HCT116 (cell line): ENCODE measurements at regions of chr4 and their contacts with region 1.

Region 1: DNA sequence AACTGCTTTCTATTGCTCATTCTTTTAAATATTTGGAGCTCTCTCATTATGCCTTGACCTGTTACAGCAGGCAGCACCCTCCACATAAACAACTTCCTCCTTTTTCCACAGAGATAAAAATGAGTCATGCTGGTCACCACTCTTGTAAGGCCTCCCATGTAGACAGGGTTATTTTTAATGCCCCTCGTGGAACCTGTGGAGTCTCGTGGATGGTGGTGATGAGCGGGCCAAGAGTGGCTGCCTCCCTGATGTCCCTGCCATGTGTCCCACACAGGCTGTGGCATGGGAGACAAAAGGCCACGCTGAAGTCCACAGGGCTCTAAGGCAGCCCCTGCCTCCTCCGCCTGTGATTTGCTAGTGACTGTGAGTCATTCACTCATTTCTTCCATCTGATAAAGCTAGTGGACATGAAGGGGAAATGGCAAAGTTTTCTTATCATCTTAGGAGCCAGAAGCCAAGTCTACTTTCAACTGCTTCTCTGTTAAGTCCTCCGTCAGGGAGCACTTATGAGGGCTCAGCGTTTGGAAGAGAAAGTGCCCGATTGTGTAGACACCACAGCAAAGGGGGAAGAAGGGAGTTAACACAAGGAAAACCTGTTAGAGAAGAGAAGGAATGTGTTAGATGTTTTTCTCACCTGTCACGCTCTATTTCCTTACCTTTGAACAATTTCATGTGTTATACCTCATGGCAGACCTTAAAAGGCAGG is 121.6 kb upstream of the FAT1 start:
- DNase-seq: peak; percentile 92
- ATAC-seq: peak; percentile 77
- H3K4me3 ChIP-seq: peak overlapping the region; percentile 4 to 44; a peak in 3 of 4 replicates
- H3K27ac ChIP-seq: peak overlapping the region; percentile 98
- H3K4me1 ChIP-seq: peaks cover 41 to 58% of the 10 kb centered on the region in 2 experiments
- H3K27me3 ChIP-seq: no peaks in the 10 kb centered on the region
- CTCF ChIP-seq: no peak
- POLR2A ChIP-seq: peak; percentile 20
- RAD21 ChIP-seq: no peak

Region 2: GRCh38 chr4:185263419-185263818 is 1581.9 kb before region 1 on chr4:
- CTCF ChIA-PET with region 1: no interaction called
- POLR2A ChIA-PET with region 1: no interaction called
- RAD21 ChIA-PET with region 1: no interaction called
- intact Hi-C with region 1: no loop called
- DNase-seq: no peak
- ATAC-seq: no peak
- H3K4me3 ChIP-seq: no peak overlapping the region
- H3K27ac ChIP-seq: no peak overlapping the region
- H3K4me1 ChIP-seq: peaks cover 5 to 7% of the 10 kb centered on the region in 2 experiments; a peak in 3 of 4 replicates
- H3K27me3 ChIP-seq: no peaks in the 10 kb centered on the region
- CTCF ChIP-seq: no peak
- POLR2A ChIP-seq: no peak
- RAD21 ChIP-seq: no peak

Region 3: GRCh38 chr4:186201535-186202230 is 643.6 kb before region 1 on chr4:
- CTCF ChIA-PET with region 1: no interaction called
- POLR2A ChIA-PET with region 1: no interaction called
- RAD21 ChIA-PET with region 1: no interaction called
- intact Hi-C with region 1: no loop called
- DNase-seq: peak; percentile 66
- ATAC-seq: peak; percentile 90
- H3K4me3 ChIP-seq: no peak overlapping the region
- H3K27ac ChIP-seq: no peak overlapping the region
- H3K4me1 ChIP-seq: peaks cover 0 to 17% of the 10 kb centered on the region in 2 experiments; a peak in 2 of 4 replicates
- H3K27me3 ChIP-seq: no peaks in the 10 kb centered on the region
- CTCF ChIP-seq: peak; percentile 90 to 98 (median 95)
- POLR2A ChIP-seq: no peak
- RAD21 ChIP-seq: peak; percentile 67

Region 4: DNA sequence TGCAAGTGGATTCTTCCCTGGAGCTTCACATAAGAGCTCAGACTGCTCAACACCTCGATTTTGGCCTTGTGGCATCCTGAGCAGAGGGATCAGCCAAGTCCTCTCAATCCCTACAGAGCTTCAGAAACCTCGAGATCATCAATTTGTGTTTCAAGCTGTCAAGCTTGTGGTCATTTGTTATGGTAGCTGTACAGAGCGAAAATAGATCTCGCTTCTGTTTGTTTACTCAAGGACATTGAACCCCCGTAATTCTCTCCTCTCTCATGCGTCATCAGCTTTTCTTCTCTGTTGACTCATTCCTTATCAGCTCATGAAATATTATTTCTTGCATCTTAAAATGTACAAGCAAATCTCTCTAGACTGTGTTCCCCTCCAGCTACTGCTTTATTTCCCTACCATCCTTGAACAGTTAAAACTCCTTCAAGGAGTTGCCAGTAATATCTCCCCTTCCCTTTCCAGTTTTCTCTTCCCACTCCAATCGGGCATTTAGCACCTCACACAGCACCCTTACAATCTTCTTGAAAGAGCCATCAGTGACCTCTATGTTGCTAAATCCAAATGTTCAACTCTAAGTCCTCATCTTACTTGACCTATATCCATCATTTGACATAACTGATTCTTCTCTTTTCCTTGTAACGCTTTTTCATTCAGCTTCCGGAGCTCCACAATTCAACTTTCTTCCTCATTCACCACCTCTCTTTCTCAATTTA is 15.4 kb before region 1 on chr4:
- CTCF ChIA-PET with region 1: no interaction called
- POLR2A ChIA-PET with region 1: interaction called, 21 read pairs
- RAD21 ChIA-PET with region 1: no interaction called
- intact Hi-C with region 1: no loop called
- DNase-seq: peak; percentile 82
- ATAC-seq: peak; percentile 43
- H3K4me3 ChIP-seq: peak overlapping the region in 1 of 2 experiments; percentile 40; a peak in 2 of 4 replicates
- H3K27ac ChIP-seq: peak overlapping the region; percentile 88
- H3K4me1 ChIP-seq: peaks cover 80 to 98% of the 10 kb centered on the region in 2 experiments
- H3K27me3 ChIP-seq: no peaks in the 10 kb centered on the region
- CTCF ChIP-seq: no peak
- POLR2A ChIP-seq: no peak
- RAD21 ChIP-seq: no peak

Region 5: DNA sequence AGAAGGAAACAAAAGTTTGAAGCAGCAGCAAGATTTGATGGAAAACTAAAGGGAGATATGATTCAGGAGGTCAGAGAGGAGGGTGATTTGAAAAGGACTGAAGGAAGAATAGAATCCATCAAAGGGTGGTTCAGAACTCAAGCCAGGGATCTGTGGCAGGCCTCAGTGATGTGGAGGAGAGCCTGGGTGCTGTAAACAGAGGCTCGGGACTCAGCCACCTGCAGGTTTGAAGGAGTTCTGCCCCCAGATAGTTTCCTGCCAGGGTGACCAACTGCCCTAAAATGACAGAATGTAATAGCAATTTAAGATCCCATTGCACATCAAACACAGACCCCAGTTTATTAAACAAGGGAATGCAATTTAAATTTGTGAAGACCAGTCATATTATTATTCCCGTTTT is 82.3 kb after region 1 on chr4:
- CTCF ChIA-PET with region 1: no interaction called
- POLR2A ChIA-PET with region 1: interaction called, 20 read pairs
- RAD21 ChIA-PET with region 1: interaction called in 1 of 2 experiments, 3 read pairs
- intact Hi-C with region 1: loop called (anchors 1 kb)
- DNase-seq: peak; percentile 60
- ATAC-seq: peak; percentile 53
- H3K4me3 ChIP-seq: no peak overlapping the region
- H3K27ac ChIP-seq: peak overlapping the region; percentile 76
- H3K4me1 ChIP-seq: peaks cover 54 to 83% of the 10 kb centered on the region in 2 experiments
- H3K27me3 ChIP-seq: no peaks in the 10 kb centered on the region
- CTCF ChIP-seq: peak in 1 of 3 experiments; percentile 43; a peak in 2 of 6 replicates
- POLR2A ChIP-seq: no peak
- RAD21 ChIP-seq: no peak

Region 6: GRCh38 chr4:186932631-186933187 is 87.4 kb after region 1 on chr4:
- CTCF ChIA-PET with region 1: no interaction called
- POLR2A ChIA-PET with region 1: interaction called, 20 read pairs
- RAD21 ChIA-PET with region 1: interaction called in 1 of 2 experiments, 3 read pairs
- intact Hi-C with region 1: loop called (anchors 1 kb)
- DNase-seq: peak; percentile 99
- ATAC-seq: peak; percentile 71
- H3K4me3 ChIP-seq: peak overlapping the region in 1 of 2 experiments; percentile 26; a peak in 2 of 4 replicates
- H3K27ac ChIP-seq: peak overlapping the region; percentile 77
- H3K4me1 ChIP-seq: peaks cover 70 to 98% of the 10 kb centered on the region in 2 experiments
- H3K27me3 ChIP-seq: no peaks in the 10 kb centered on the region
- CTCF ChIP-seq: no peak
- POLR2A ChIP-seq: no peak
- RAD21 ChIP-seq: no peak

Region 7: DNA sequence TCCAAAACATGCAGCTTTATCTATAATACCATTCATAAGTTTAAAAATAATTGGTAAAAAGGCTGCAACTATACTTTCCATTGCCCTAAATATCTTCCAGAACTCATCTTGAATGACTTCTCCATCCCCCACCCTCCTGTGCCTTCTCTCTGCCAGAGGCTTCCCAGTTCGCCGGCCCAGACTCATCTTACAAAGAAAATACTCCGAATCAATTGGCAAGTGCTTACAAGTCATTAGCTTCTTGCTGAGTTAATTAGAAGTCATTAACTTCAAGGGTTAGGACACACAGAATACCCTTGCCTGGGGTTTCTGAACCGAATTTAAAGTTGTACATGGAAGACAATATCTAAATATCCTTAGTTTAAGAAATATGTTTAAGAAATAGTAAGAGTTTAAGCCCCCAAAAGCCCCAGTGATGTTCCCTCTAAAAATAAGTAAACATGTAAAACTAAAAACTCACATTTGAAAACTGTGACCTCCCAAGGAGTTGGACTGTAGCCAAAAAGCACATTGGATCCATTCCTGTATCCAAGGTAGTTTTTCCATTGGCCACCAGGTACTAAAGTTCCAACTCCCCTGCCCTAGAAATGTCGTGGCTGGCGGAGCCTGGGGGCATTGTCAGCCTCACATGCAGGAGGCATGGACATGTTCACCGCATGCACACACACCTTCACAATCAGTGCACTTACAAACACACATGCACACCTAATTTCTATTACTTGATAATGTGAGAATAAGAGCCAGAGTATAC is 413.5 kb after region 1 on chr4:
- CTCF ChIA-PET with region 1: no interaction called
- POLR2A ChIA-PET with region 1: no interaction called
- RAD21 ChIA-PET with region 1: no interaction called
- intact Hi-C with region 1: no loop called
- DNase-seq: no peak
- ATAC-seq: no peak
- H3K4me3 ChIP-seq: no peak overlapping the region
- H3K27ac ChIP-seq: no peak overlapping the region
- H3K4me1 ChIP-seq: no peaks in the 10 kb centered on the region
- H3K27me3 ChIP-seq: no peaks in the 10 kb centered on the region
- CTCF ChIP-seq: no peak
- POLR2A ChIP-seq: no peak
- RAD21 ChIP-seq: no peak